ENCODE measurements at regions of chr11 and their contacts with region 1.

Region 1: DNA sequence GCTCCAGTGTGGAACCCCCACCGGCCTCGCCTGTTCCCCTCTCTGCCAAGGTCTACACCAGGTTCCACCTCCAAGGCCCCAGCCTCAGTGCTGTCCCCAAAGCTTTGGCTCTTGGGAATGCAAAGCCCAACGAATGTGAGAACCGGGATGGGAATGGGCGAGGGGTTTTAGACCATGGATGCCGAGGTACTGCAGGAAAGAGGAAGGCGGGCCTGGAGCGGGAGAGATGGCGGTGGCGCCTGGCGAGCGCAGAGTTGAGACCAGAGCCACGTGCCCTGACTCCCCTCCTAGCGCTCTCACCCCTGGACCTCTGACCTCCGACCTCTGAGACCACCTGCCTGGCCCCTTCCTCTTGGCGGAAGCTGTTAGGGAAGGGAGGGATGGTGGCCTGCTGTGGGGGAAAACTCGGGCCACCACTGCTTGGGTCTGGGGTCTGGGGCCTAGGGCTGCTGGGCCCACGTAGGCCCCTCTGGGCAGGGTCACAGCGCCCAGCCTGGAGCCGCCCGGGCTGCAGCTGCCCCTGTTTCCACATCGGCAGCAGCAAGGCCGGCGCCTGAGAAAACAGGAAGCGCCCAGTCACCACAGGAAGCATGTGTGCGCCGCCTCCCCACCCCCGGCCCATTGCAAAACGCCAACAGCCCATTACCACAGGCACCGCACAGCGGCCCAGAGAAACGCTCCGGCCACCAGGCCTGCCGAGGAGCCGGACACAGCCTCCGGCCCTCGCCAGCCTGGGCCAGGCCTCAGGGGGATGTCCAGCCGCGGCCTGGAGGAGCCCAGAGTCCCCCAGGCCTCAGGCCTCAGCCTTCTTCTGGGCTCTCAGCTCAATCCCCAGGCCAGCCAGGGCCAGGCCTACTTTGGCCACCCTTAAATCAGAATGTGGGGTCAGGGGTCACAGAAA is 13.8 kb upstream of the SLC39A13 start:
- DNase-seq: peak; percentile 28 to 81 (median 66)
- ATAC-seq: peak; percentile 80
- H3K4me3 ChIP-seq: peak overlapping the region; percentile 51
- H3K4me3 Mint-ChIP-seq: peak overlapping the region; percentile 65
- H3K27ac ChIP-seq: peak overlapping the region; percentile 83 to 93
- H3K27ac Mint-ChIP-seq: peak overlapping the region; percentile 94
- H3K4me1 ChIP-seq: peaks cover 70% of the 10 kb centered on the region
- H3K4me1 Mint-ChIP-seq: peaks cover 55% of the 10 kb centered on the region
- H3K27me3 ChIP-seq: no peaks in the 10 kb centered on the region
- H3K27me3 Mint-ChIP-seq: no peaks in the 10 kb centered on the region
- CTCF ChIP-seq: no peak

Region 2: DNA sequence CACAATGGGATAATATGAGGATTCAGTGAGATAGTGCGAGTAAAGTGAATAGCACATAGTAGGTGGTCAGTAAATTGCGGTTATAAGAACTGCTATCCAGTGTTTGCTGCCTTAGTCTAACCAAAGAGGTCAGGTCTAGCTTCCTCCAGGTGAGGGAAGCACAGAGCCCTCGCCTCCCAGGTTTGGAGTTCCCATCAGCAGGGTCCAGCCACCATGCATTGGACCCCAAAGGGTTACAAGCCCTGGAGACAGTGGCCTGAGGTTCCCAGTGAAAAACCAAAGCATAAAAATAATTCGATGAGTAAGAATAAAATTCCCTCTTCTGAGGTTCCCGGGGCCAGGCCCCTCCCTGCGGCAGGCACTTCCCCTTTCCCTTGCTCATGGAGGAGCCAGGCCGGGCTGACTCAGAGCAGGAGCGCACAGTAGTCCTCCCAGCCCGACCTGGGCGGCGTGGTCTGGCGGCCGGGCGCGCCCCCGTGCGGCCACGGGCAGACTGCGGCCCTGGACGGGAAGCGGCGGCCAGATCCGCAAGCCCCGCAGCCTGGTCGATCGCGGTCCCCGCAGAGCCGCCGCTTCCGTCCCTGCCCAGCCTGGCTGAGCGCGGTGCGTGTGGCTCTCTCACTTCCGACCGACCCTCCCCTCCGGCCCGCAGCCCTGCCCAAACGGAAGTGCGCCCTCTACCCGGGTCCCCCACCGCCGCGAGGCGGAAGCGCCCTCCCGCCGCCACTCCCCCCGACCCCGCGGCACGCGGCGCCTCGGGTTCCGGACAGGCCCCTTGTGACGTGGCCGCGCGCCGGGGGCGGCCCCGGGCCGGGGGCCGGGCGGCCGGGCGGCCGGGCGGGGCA is 13.4 kb after region 1 on chr11 and contains the start of gene SLC39A13:
- CTCF ChIA-PET with region 1: interaction called, 10 read pairs
- POLR2A ChIA-PET with region 1: interaction called, 11 read pairs
- intact Hi-C with region 1: no loop called
- DNase-seq: peak; percentile 78 to 95 (median 89)
- ATAC-seq: peak; percentile 86
- H3K4me3 ChIP-seq: peak within 1 kb of the TSS; percentile 74
- H3K4me3 Mint-ChIP-seq: peak within 1 kb of the TSS; percentile 99
- H3K27ac ChIP-seq: peak within 1 kb of the TSS; percentile 84 to 88
- H3K27ac Mint-ChIP-seq: peak within 1 kb of the TSS; percentile 95
- H3K4me1 ChIP-seq: peaks cover 40% of the 10 kb centered on the region
- H3K4me1 Mint-ChIP-seq: peaks cover 17% of the 10 kb centered on the region
- H3K27me3 ChIP-seq: no peaks in the 10 kb centered on the region
- H3K27me3 Mint-ChIP-seq: no peaks in the 10 kb centered on the region
- CTCF ChIP-seq: peak; percentile 84
- total RNA-seq, gene SLC39A13: 36.6 to 39.2 TPM